ENCODE measurements at regions of chr13 and their contacts with region 1.

Region 1: DNA sequence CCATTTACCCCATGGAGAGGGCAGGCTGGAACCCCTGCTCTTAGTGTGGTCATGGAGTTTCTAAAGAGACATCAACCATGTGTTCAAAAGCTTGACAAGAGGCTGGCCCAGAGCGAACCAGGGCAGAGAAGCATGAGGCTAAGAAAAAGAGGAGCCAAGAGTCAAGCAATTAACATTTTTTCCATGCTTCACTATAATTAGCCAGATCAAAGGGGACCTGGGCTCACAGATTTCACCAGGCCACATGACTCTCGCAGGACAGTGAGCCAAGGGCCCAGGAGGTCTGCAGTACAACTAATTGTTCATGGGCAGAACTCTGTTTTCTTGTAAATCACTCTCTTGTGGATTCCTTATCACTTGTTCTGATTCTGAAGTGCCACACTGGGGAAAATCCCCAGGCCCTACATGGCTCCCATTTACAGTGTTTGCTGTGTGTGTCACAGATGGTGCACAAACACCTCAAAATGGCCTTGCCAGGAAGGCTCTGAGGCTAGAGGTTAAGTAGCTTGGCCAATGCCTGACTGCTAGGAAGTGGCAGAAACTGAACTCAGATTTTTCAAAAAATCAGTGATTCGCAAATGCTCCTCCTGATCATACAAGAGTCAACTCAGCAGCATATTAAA is 101.2 kb downstream of the LHFPL6 start:
- DNase-seq: no peak
- H3K4me3 ChIP-seq: no peak overlapping the region
- H3K27ac ChIP-seq: no peak overlapping the region
- H3K4me1 ChIP-seq: peaks cover 9% of the 10 kb centered on the region
- H3K27me3 ChIP-seq: no peaks in the 10 kb centered on the region
- CTCF ChIP-seq: no peak

Region 2: DNA sequence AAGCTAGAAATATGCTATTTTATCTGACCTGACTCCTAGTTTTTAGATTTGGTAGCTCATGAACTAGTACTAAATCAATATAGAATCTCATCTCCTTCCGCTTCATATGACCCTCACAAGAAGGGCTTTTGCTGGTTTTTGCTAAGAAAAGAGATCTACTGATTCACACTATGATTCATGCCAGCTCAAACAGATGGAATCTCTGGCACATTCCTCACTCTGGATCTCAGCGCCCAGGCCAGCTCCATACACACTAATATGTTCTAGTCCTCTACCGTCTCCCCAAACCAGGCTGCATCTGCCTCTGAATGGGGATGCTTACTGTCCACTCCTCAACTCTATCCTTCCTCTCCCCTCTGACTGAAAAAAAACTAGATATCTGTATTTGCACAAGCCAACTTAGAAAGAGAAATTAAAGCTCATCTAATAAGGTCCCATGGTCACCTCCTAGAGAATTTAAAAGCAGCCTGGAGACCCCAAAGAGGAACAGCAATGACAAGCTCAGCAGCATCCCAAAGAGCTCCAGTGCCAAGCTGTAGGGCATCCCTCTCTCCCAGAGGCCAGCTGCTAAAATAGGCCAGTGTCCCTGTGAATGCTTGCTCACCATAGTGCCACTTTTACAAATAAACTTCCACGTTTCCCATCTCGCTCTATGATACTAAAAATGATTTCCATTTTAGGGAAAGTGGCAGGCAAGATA is 26.3 kb after region 1 on chr13:
- CTCF ChIA-PET with region 1: no interaction called
- dilution Hi-C with region 1: no loop called
- in situ Hi-C with region 1: no loop called
- intact Hi-C with region 1: loop called (anchors 1 kb)
- DNase-seq: peak; percentile 79
- H3K4me3 ChIP-seq: no peak overlapping the region
- H3K27ac ChIP-seq: peak overlapping the region; percentile 50
- H3K4me1 ChIP-seq: peaks cover 35% of the 10 kb centered on the region
- H3K27me3 ChIP-seq: no peaks in the 10 kb centered on the region
- CTCF ChIP-seq: no peak

Region 3: GRCh38 chr13:39565036-39565949 is 63.5 kb after region 1 on chr13:
- CTCF ChIA-PET with region 1: no interaction called
- dilution Hi-C with region 1: loop called (anchors 5 kb)
- in situ Hi-C with region 1: no loop called
- intact Hi-C with region 1: loop called (anchors 1 kb)
- DNase-seq: peak; percentile 87
- H3K4me3 ChIP-seq: peak overlapping the region; percentile 11 to 25 (median 14)
- H3K27ac ChIP-seq: peak overlapping the region; percentile 88
- H3K4me1 ChIP-seq: peaks cover 49% of the 10 kb centered on the region
- H3K27me3 ChIP-seq: no peaks in the 10 kb centered on the region
- CTCF ChIP-seq: no peak

Region 4: GRCh38 chr13:39571502-39572092 is 69.8 kb after region 1 on chr13:
- CTCF ChIA-PET with region 1: no interaction called
- dilution Hi-C with region 1: loop called (anchors 5 kb)
- in situ Hi-C with region 1: no loop called
- intact Hi-C with region 1: no loop called
- DNase-seq: no peak
- H3K4me3 ChIP-seq: no peak overlapping the region
- H3K27ac ChIP-seq: no peak overlapping the region
- H3K4me1 ChIP-seq: peaks cover 9% of the 10 kb centered on the region
- H3K27me3 ChIP-seq: no peaks in the 10 kb centered on the region
- CTCF ChIP-seq: no peak

Region 5: GRCh38 chr13:40517486-40518480 is 1016.0 kb after region 1 on chr13:
- CTCF ChIA-PET with region 1: no interaction called
- dilution Hi-C with region 1: no loop called
- in situ Hi-C with region 1: no loop called
- intact Hi-C with region 1: no loop called
- DNase-seq: no peak
- H3K4me3 ChIP-seq: no peak overlapping the region
- H3K27ac ChIP-seq: no peak overlapping the region
- H3K4me1 ChIP-seq: no peaks in the 10 kb centered on the region
- H3K27me3 ChIP-seq: no peaks in the 10 kb centered on the region
- CTCF ChIP-seq: no peak